GM10248 (cell line): ENCODE measurements at regions of chr4 and their contacts with region 1.

Region 1: DNA sequence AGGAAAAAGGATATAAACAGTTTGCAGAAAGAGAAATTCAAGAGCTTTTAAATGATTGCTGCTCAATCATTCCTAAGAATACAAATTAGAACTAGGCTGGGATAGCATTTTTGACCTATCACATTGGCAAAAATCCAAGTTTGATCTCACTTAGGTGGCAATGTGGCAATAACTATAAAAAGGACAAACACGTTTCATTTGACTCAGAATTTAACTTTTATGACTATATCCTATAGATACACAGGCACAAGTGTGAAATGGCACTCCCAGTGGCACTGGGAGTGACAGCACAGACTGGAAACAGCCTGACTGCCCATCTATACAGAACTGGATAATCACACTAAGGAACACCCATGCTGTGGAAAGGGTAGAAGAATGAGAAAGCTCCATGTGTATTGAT is 11.1 kb downstream of the CENPU start:
- DNase-seq: no peak
- CTCF ChIP-seq: no peak

Region 2: DNA sequence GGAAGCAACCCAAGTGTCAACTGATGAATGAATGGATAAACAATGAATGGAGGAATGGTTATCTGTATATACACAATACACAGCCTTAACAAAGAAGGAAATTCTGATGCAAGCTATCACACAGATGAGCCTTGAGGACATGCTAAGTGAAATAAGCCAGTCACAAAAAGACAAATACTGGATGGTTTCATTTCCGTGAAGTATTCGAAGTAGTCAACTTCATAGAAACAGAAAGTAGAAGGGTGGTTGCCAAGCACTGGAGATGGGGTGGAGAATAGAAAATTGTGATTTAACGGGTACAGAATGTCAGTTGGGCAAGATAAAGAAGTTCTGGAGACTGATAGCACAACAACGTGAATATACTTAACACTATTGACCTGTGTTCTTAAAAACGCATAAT is 17.1 kb before region 1 on chr4:
- CTCF ChIA-PET with region 1: interaction called, 11 read pairs
- POLR2A ChIA-PET with region 1: no interaction called
- DNase-seq: no peak
- CTCF ChIP-seq: no peak